ENCODE measurements at regions of chr15 and their contacts with region 1.

Region 1: DNA sequence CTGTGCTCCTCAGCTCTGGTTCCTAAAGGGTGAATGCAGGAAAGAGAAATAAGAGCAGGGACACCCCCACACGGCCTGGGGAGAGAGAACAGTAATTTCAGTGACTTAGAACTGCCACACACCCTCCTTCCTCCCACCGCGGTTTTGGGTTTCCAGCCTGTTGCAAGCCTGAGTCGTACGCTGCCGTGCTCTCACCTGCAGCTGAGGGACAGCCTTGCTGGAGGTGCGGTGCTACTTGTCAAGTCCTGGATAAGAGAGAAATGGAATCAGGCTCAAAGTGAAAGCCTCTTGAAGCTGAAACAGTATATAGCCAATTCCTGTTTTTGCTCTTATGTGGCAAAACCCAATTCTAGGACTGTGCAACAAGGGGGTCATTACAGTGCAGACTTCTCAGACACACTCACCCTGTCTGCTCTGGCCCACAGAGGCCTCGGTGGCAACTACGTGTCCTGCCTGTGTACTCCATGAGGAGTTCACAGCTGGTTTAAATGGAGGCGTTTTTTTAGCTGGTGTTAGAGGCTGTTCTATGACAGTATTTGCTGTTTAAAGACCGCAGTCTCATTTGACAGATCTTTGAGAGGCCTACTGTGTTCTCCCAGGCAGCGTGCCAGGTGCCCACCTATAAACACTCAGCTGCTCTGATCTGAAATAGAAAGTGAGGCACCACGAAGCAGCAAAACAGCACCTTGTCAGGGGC is 42.9 kb downstream of the TBC1D2B start:
- DNase-seq: peak; percentile 42
- H3K4me3 ChIP-seq: no peak overlapping the region
- H3K27ac ChIP-seq: peak overlapping the region; percentile 65
- H3K4me1 ChIP-seq: peaks cover 34% of the 10 kb centered on the region
- H3K27me3 ChIP-seq: no peaks in the 10 kb centered on the region
- CTCF ChIP-seq: no peak
- POLR2A ChIP-seq: no peak

Region 2: GRCh38 chr15:77507911-77508310 is 526.7 kb before region 1 on chr15:
- CTCF ChIA-PET with region 1: no interaction called
- POLR2A ChIA-PET with region 1: no interaction called
- dilution Hi-C with region 1: no loop called
- intact Hi-C with region 1: no loop called
- DNase-seq: peak; percentile 82
- H3K4me3 ChIP-seq: peak overlapping the region in 1 of 3 experiments; percentile 20
- H3K27ac ChIP-seq: peak overlapping the region; percentile 95
- H3K4me1 ChIP-seq: peaks cover 39% of the 10 kb centered on the region
- H3K27me3 ChIP-seq: no peaks in the 10 kb centered on the region
- CTCF ChIP-seq: no peak
- POLR2A ChIP-seq: no peak

Region 3: GRCh38 chr15:77889009-77889806 is 145.4 kb before region 1 on chr15:
- CTCF ChIA-PET with region 1: no interaction called
- POLR2A ChIA-PET with region 1: no interaction called
- dilution Hi-C with region 1: no loop called
- intact Hi-C with region 1: no loop called
- DNase-seq: no peak
- H3K4me3 ChIP-seq: no peak overlapping the region
- H3K27ac ChIP-seq: no peak overlapping the region
- H3K4me1 ChIP-seq: no peaks in the 10 kb centered on the region
- H3K27me3 ChIP-seq: no peaks in the 10 kb centered on the region
- CTCF ChIP-seq: no peak
- POLR2A ChIP-seq: no peak

Region 4: GRCh38 chr15:78018946-78019644 is 15.5 kb before region 1 on chr15:
- CTCF ChIA-PET with region 1: interaction called, 12 read pairs
- POLR2A ChIA-PET with region 1: no interaction called
- dilution Hi-C with region 1: no loop called
- intact Hi-C with region 1: no loop called
- DNase-seq: no peak
- H3K4me3 ChIP-seq: no peak overlapping the region
- H3K27ac ChIP-seq: no peak overlapping the region
- H3K4me1 ChIP-seq: no peaks in the 10 kb centered on the region
- H3K27me3 ChIP-seq: no peaks in the 10 kb centered on the region
- CTCF ChIP-seq: no peak
- POLR2A ChIP-seq: no peak

Region 5: DNA sequence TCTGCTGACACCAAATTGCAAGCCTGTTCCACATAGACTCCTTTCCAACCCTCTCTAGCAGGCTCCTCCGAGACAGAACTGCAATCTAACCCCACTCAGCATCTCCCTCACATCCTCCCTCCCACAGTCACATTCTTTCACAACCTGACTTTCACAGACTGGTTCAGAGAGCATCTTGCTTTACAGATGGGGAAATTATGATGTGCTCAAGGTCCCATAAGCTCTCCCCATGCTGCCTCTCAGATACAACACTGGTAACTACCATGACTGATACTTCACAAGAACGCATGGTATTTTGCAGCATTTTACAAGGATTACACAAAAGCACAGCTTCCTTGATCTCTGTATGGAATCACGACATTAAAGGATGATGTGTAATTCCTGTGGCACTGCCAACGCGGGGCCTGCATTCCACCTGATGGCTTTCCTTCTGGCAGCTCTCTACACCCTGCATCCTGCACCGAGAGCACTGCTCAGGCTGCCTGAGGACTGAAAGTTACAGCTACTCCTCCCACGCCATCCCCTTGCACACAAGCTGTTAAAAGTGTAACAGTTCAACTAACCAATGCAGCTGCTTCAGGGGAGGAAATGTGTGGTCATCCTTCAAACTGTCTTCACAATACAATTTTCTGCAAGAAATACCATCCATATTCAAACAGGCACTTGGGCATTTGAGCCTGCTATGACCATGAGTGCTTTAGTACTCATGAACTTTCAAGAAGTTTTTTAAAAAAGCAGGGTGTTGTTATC is 15.2 kb after region 1 on chr15:
- CTCF ChIA-PET with region 1: interaction called, 25 read pairs
- POLR2A ChIA-PET with region 1: no interaction called
- dilution Hi-C with region 1: no loop called
- intact Hi-C with region 1: loop called (anchors 2 kb)
- DNase-seq: no peak
- H3K4me3 ChIP-seq: no peak overlapping the region
- H3K27ac ChIP-seq: no peak overlapping the region
- H3K4me1 ChIP-seq: peaks cover 45% of the 10 kb centered on the region
- H3K27me3 ChIP-seq: no peaks in the 10 kb centered on the region
- CTCF ChIP-seq: no peak
- POLR2A ChIP-seq: no peak

Region 6: DNA sequence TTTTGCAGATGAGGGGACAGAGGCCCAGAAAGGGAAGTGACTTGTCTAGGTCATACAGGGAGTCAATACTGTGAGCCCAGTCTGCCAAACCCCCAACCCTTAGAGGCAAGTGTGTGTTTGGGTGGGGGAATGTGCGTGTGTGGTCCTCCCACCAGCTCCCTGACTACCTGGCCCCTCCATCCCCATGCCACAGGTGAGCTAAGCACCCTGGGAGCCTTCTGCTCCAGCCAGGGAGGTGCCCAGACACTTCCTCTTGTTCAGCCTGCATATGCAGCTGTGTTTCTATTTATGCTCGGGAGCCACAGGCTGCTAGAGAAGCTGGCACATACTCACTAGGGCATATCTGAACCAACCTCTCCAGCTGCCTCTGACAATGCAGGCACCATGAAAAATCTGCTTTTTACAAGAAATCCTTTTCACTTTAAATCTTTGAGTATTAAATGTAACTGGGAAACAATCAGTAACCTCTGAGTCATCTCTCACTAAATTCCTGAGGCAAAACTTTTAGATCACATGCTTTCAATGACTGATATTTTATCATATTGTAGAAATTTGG is 22.1 kb after region 1 on chr15:
- CTCF ChIA-PET with region 1: interaction called, 25 read pairs
- POLR2A ChIA-PET with region 1: no interaction called
- dilution Hi-C with region 1: no loop called
- intact Hi-C with region 1: loop called (anchors 1 kb)
- DNase-seq: peak; percentile 61
- H3K4me3 ChIP-seq: no peak overlapping the region
- H3K27ac ChIP-seq: peak overlapping the region; percentile 74
- H3K4me1 ChIP-seq: peaks cover 47% of the 10 kb centered on the region
- H3K27me3 ChIP-seq: no peaks in the 10 kb centered on the region
- CTCF ChIP-seq: no peak
- POLR2A ChIP-seq: no peak

Region 7: GRCh38 chr15:78065284-78065872 is 30.7 kb after region 1 on chr15:
- CTCF ChIA-PET with region 1: interaction called, 15 read pairs
- POLR2A ChIA-PET with region 1: no interaction called
- dilution Hi-C with region 1: no loop called
- intact Hi-C with region 1: loop called (anchors 2 kb)
- DNase-seq: peak; percentile 68
- H3K4me3 ChIP-seq: no peak overlapping the region
- H3K27ac ChIP-seq: peak overlapping the region; percentile 27
- H3K4me1 ChIP-seq: peaks cover 61% of the 10 kb centered on the region
- H3K27me3 ChIP-seq: no peaks in the 10 kb centered on the region
- CTCF ChIP-seq: no peak
- POLR2A ChIP-seq: no peak

Region 8: GRCh38 chr15:78077058-78077877 is 42.6 kb after region 1 on chr15 and contains the start of gene TBC1D2B:
- CTCF ChIA-PET with region 1: interaction called, 14 read pairs
- POLR2A ChIA-PET with region 1: interaction called, 3 read pairs
- dilution Hi-C with region 1: no loop called
- intact Hi-C with region 1: loop called (anchors 1 kb)
- DNase-seq: peak; percentile 51
- H3K4me3 ChIP-seq: peak within 1 kb of the TSS; percentile 56 to 84 (median 63)
- H3K27ac ChIP-seq: peak within 1 kb of the TSS; percentile 87
- H3K4me1 ChIP-seq: peaks cover 17% of the 10 kb centered on the region
- H3K27me3 ChIP-seq: no peaks in the 10 kb centered on the region
- CTCF ChIP-seq: no peak
- POLR2A ChIP-seq: peak; percentile 59
- total RNA-seq, gene TBC1D2B: 45.4 and 46.1 TPM in 2 replicates

Region 9: DNA sequence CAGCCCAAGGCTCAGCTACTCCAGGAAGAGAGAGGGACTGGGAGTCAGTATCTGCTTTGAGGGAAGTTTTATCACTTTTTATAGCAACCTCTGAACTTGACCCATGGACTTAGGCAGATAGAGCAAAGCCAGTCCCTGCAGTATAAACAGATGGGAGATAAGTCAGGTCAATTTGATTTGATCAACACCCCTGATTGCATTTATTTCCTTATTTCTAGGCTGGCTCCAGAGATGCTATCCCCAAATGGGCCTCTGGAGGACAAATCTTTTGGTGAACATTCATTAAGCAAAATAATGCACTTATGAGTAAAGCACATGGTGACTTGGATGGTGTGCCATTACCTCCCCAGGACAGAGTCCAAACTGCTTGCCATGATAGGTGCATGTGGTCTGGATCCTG is 105.6 kb after region 1 on chr15:
- CTCF ChIA-PET with region 1: no interaction called
- POLR2A ChIA-PET with region 1: no interaction called
- dilution Hi-C with region 1: no loop called
- intact Hi-C with region 1: no loop called
- DNase-seq: no peak
- H3K4me3 ChIP-seq: no peak overlapping the region
- H3K27ac ChIP-seq: no peak overlapping the region
- H3K4me1 ChIP-seq: no peaks in the 10 kb centered on the region
- H3K27me3 ChIP-seq: peaks cover 6 to 9% of the 10 kb centered on the region in 2 experiments
- CTCF ChIP-seq: no peak
- POLR2A ChIP-seq: no peak

Region 10: DNA sequence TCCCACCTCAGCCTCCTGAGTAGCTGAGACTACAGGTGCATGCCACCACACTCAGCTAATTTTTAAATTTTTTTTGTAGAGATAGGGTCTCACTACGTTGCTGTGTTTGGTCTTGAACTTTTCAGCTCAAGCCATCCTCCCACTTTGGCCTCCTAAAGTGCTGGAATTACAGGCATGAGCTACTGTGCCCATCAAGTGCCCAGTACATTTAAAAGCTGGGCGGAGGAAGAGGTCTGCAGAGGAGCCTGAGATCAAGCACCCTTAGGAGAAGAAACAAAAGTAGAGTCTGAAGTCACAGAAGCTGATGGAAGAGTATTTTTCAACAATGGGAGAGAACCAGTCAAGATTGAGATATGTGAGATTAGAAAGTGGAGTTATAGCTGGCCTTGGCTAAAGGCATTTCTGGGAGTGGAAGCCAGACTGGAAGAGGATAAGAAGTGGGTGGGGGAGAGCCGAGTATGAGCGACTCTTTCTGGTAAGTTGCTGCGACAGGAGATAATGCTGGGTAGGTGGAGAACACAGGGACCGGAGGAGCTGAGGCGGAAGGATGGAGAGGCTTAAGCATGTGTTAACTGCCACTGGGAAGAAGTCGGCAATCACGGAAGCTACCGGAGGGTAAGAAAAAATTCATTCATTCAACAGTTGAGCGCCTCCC is 402.6 kb after region 1 on chr15:
- CTCF ChIA-PET with region 1: no interaction called
- POLR2A ChIA-PET with region 1: no interaction called
- dilution Hi-C with region 1: no loop called
- intact Hi-C with region 1: no loop called
- DNase-seq: no peak
- H3K4me3 ChIP-seq: peak overlapping the region; percentile 43 to 93 (median 46)
- H3K27ac ChIP-seq: peak overlapping the region; percentile 20
- H3K4me1 ChIP-seq: peaks cover 17% of the 10 kb centered on the region
- H3K27me3 ChIP-seq: peaks cover 3 to 7% of the 10 kb centered on the region in 2 experiments
- CTCF ChIP-seq: no peak
- POLR2A ChIP-seq: no peak